ENCODE measurements at regions of chr2 and their contacts with region 1.

Region 1: GRCh38 chr2:8234757-8235374 is 447.0 kb upstream of the ID2 start:
- DNase-seq: peak in 1 of 3 donors; percentile 57
- H3K4me3 ChIP-seq: peak overlapping the region in 1 of 3 experiments; percentile 24
- H3K4me3 Mint-ChIP-seq: no peak overlapping the region
- H3K27ac ChIP-seq: peak overlapping the region; percentile 46 to 86
- H3K27ac Mint-ChIP-seq: peak overlapping the region; percentile 89 to 97 (median 92)
- H3K4me1 ChIP-seq: peaks cover 42 to 52% of the 10 kb centered on the region in 2 donors
- H3K4me1 Mint-ChIP-seq: peaks cover 55% of the 10 kb centered on the region
- H3K27me3 ChIP-seq: no peaks in the 10 kb centered on the region
- H3K27me3 Mint-ChIP-seq: peaks cover 0 to 1% (median 0%) of the 10 kb centered on the region in 3 donors
- CTCF ChIP-seq: no peak

Region 2: GRCh38 chr2:8171608-8172007 is 63.3 kb before region 1 on chr2:
- intact Hi-C with region 1: loop called (anchors 5 to 10 kb)
- DNase-seq: no peak
- H3K4me3 ChIP-seq: no peak overlapping the region
- H3K4me3 Mint-ChIP-seq: no peak overlapping the region
- H3K27ac ChIP-seq: no peak overlapping the region
- H3K27ac Mint-ChIP-seq: no peak overlapping the region
- H3K4me1 ChIP-seq: peaks cover 14 to 24% of the 10 kb centered on the region in 2 donors
- H3K4me1 Mint-ChIP-seq: peaks cover 31% of the 10 kb centered on the region
- H3K27me3 ChIP-seq: no peaks in the 10 kb centered on the region
- H3K27me3 Mint-ChIP-seq: no peaks in the 10 kb centered on the region
- CTCF ChIP-seq: no peak

Region 3: DNA sequence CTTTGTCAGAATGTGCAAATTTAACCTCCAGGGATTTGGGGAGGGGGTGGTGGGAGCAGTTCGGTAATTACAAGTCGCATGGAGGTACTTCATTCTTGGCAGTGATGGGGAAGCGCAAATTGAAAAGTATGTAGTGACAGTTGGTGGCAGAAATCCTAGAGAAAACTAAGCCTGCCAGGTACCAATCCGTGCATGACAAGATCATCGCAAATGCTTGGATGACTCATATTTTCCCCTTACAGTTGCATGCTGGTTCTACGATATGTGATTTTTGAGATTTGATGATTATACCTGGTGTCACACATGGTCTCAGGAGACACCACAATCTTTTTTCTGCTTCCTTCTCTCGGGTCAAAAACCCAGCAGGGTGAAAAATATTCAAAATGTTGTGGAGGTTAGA is 32.7 kb before region 1 on chr2:
- intact Hi-C with region 1: loop called in 1 of 2 experiments (anchors 5 kb)
- DNase-seq: no peak
- H3K4me3 ChIP-seq: no peak overlapping the region
- H3K4me3 Mint-ChIP-seq: no peak overlapping the region
- H3K27ac ChIP-seq: no peak overlapping the region
- H3K27ac Mint-ChIP-seq: no peak overlapping the region
- H3K4me1 ChIP-seq: peaks cover 7 to 12% of the 10 kb centered on the region in 2 donors
- H3K4me1 Mint-ChIP-seq: peaks cover 15% of the 10 kb centered on the region
- H3K27me3 ChIP-seq: no peaks in the 10 kb centered on the region
- H3K27me3 Mint-ChIP-seq: peaks cover 0 to 4% (median 2%) of the 10 kb centered on the region in 3 donors
- CTCF ChIP-seq: no peak

Region 4: DNA sequence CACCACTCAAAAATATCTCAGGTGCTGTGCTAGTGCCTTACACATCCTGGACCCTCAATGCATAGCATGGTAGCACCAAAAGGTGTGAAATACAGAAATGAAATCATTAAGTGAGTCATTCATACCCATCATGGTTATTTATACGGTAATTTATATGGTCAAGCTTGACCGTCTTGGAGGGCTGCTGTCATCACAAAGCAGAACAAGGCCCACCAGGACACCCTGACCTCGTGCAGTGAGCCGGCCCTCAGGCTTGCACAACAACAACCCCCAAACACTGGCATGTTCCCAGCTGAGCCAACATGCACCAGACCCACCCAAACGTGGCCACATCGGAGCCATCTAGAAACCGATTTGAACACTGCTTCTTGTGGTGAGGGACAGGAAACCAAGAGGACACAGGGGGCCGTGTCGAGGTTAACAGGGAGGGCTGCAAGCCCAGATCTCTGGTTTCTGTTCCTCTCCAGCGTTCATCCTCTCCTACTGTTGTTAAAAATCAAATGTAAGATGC is 68.5 kb after region 1 on chr2:
- intact Hi-C with region 1: loop called in 1 of 2 experiments (anchors 5 kb)
- DNase-seq: peak; percentile 77 to 89 (median 79)
- H3K4me3 ChIP-seq: peak overlapping the region in 1 of 3 experiments; percentile 6
- H3K4me3 Mint-ChIP-seq: peak overlapping the region; percentile 47 to 73
- H3K27ac ChIP-seq: peak overlapping the region; percentile 84 to 85
- H3K27ac Mint-ChIP-seq: peak overlapping the region; percentile 93 to 96 (median 96)
- H3K4me1 ChIP-seq: peaks cover 93 to 100% of the 10 kb centered on the region in 2 donors
- H3K4me1 Mint-ChIP-seq: peaks cover 95% of the 10 kb centered on the region
- H3K27me3 ChIP-seq: no peaks in the 10 kb centered on the region
- H3K27me3 Mint-ChIP-seq: peaks cover under 1 to 3% (median 1%) of the 10 kb centered on the region in 3 donors
- CTCF ChIP-seq: peak; percentile 49

Region 5: GRCh38 chr2:8312861-8313830 is 78.3 kb after region 1 on chr2:
- intact Hi-C with region 1: loop called (anchors 5 to 10 kb)
- DNase-seq: peak; percentile 51 to 79 (median 73)
- H3K4me3 ChIP-seq: peak overlapping the region in 1 of 3 experiments; percentile 51
- H3K4me3 Mint-ChIP-seq: peak overlapping the region in 1 of 2 donors; percentile 31
- H3K27ac ChIP-seq: peak overlapping the region; percentile 41 to 86
- H3K27ac Mint-ChIP-seq: peak overlapping the region; percentile 86 to 93 (median 91)
- H3K4me1 ChIP-seq: peaks cover 82 to 87% of the 10 kb centered on the region in 2 donors
- H3K4me1 Mint-ChIP-seq: peaks cover 84% of the 10 kb centered on the region
- H3K27me3 ChIP-seq: no peaks in the 10 kb centered on the region
- H3K27me3 Mint-ChIP-seq: peaks cover 0 to 7% (median 6%) of the 10 kb centered on the region in 3 donors
- CTCF ChIP-seq: no peak

Region 6: GRCh38 chr2:8380026-8380425 is 145.2 kb after region 1 on chr2:
- intact Hi-C with region 1: no loop called
- DNase-seq: peak; percentile 18 to 47 (median 26)
- H3K4me3 ChIP-seq: peak overlapping the region in 1 of 3 experiments; percentile 38
- H3K4me3 Mint-ChIP-seq: peak overlapping the region; percentile 50 to 79
- H3K27ac ChIP-seq: no peak overlapping the region
- H3K27ac Mint-ChIP-seq: peak overlapping the region in 5 of 7 donors; percentile 29 to 70 (median 53)
- H3K4me1 ChIP-seq: peaks cover 15 to 16% of the 10 kb centered on the region in 2 donors
- H3K4me1 Mint-ChIP-seq: peaks cover 15% of the 10 kb centered on the region
- H3K27me3 ChIP-seq: no peaks in the 10 kb centered on the region
- H3K27me3 Mint-ChIP-seq: peaks cover 0 to 3% (median 2%) of the 10 kb centered on the region in 3 donors
- CTCF ChIP-seq: no peak

Region 7: GRCh38 chr2:8544786-8545694 is 310.2 kb after region 1 on chr2:
- intact Hi-C with region 1: loop called in 1 of 2 experiments (anchors 10 kb)
- DNase-seq: peak; percentile 95 to 98 (median 96)
- H3K4me3 ChIP-seq: peak overlapping the region in 1 of 3 experiments; percentile 33
- H3K4me3 Mint-ChIP-seq: peak overlapping the region; percentile 47 to 65
- H3K27ac ChIP-seq: peak overlapping the region; percentile 93 to 98
- H3K27ac Mint-ChIP-seq: peak overlapping the region; percentile 98 to 100 (median 99)
- H3K4me1 ChIP-seq: peaks cover 68 to 79% of the 10 kb centered on the region in 2 donors
- H3K4me1 Mint-ChIP-seq: peaks cover 77% of the 10 kb centered on the region
- H3K27me3 ChIP-seq: no peaks in the 10 kb centered on the region
- H3K27me3 Mint-ChIP-seq: peaks cover 2 to 4% (median 2%) of the 10 kb centered on the region in 3 donors
- CTCF ChIP-seq: peak; percentile 70